ENCODE measurements at regions of chr11 and their contacts with region 1.

Region 1: GRCh38 chr11:75241036-75241905 is 697 bp downstream of the TPBGL start:
- DNase-seq: peak; percentile 86 to 87
- ATAC-seq: peak; percentile 79 to 90
- H3K4me3 ChIP-seq: peak overlapping the region; percentile 54
- H3K27ac ChIP-seq: peak overlapping the region; percentile 68 to 81; a peak in 5 of 6 replicates
- H3K4me1 ChIP-seq: peaks cover 10% of the 10 kb centered on the region; the same call in 2 of the 3 replicates
- CTCF ChIP-seq: peak; percentile 99
- EP300 ChIP-seq: no peak
- POLR2A ChIP-seq: 0 out of 2 replicates have a peak, but pooled peaks have one; percentile 36
- RAD21 ChIP-seq: peak; percentile 40 to 69; a peak in 4 of 5 replicates

Region 2: DNA sequence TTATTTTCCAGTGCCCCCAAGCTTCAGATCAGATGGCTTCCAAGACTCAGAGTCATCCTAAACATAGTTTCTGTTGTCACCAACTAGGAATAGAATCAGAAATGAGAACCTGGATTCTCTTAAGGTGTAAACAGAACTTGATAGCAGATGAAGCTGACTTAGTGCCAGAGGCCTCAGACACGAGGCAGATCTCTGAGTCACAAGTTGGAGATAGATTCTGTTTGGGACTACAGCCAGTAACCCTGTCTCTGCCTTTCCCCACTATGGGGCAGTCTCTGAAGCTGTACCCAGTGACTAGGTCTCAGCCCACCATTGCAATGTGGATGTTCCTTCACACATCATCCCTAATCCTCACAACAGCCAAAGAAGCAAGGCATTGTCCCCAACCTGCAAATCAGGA is 227.1 kb before region 1 on chr11:
- CTCF ChIA-PET with region 1: interaction called, 355 read pairs
- POLR2A ChIA-PET with region 1: no interaction called
- DNase-seq: peak in 1 of 2 experiments; percentile 18
- ATAC-seq: peak; percentile 41 to 63; a peak in 2 of 6 replicates
- H3K4me3 ChIP-seq: no peak overlapping the region
- H3K27ac ChIP-seq: no peak overlapping the region
- H3K4me1 ChIP-seq: peaks cover 3% of the 10 kb centered on the region; the same call in 1 of the 3 replicates
- CTCF ChIP-seq: no peak
- EP300 ChIP-seq: no peak
- POLR2A ChIP-seq: no peak
- RAD21 ChIP-seq: no peak

Region 3: GRCh38 chr11:75142714-75143419 is 98.4 kb before region 1 on chr11:
- CTCF ChIA-PET with region 1: interaction called, 445 read pairs
- POLR2A ChIA-PET with region 1: interaction called, 3 read pairs
- DNase-seq: peak; percentile 83 to 93
- ATAC-seq: peak; percentile 82 to 87
- H3K4me3 ChIP-seq: no peak overlapping the region
- H3K27ac ChIP-seq: peak overlapping the region; percentile 63 to 77
- H3K4me1 ChIP-seq: peaks cover 11% of the 10 kb centered on the region
- CTCF ChIP-seq: no peak
- EP300 ChIP-seq: no peak
- POLR2A ChIP-seq: 0 out of 2 replicates have a peak, but pooled peaks have one; percentile 8
- RAD21 ChIP-seq: no peak

Region 4: GRCh38 chr11:75204685-75205563 is 36.3 kb before region 1 on chr11:
- CTCF ChIA-PET with region 1: interaction called, 48 read pairs
- POLR2A ChIA-PET with region 1: no interaction called
- DNase-seq: peak; percentile 75 to 84
- ATAC-seq: peak; percentile 85 to 99
- H3K4me3 ChIP-seq: no peak overlapping the region
- H3K27ac ChIP-seq: no peak overlapping the region
- H3K4me1 ChIP-seq: no peaks in the 10 kb centered on the region
- CTCF ChIP-seq: peak; percentile 85
- EP300 ChIP-seq: no peak
- POLR2A ChIP-seq: no peak
- RAD21 ChIP-seq: peak; percentile 90 to 91

Region 5: DNA sequence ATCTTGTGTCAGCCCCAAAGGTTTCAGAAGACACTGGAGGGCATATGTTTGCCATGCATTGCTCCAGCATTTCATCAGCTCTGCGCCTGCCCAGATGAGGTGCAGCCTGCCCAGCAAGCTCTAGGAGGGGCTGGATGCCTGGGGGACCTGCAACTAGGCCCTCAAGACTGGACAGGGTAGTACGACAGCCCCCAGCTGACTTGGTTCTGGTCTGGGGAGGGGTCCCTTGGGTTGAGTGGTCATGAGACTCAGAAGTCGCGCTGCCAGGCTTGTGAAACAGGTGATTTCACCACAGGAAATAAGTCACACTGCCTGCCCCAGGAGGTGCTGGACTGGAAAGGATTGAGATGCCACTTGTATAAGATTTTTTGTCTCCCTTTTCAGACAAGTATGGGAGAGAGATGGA is 22.7 kb after region 1 on chr11:
- CTCF ChIA-PET with region 1: interaction called, 26 read pairs
- POLR2A ChIA-PET with region 1: no interaction called
- DNase-seq: no peak
- ATAC-seq: no peak; a peak in 1 of 6 replicates
- H3K4me3 ChIP-seq: no peak overlapping the region
- H3K27ac ChIP-seq: peak overlapping the region; percentile 19 to 43; a peak in 1 of 6 replicates
- H3K4me1 ChIP-seq: peaks cover 9% of the 10 kb centered on the region; the same call in 1 of the 3 replicates
- CTCF ChIP-seq: no peak
- EP300 ChIP-seq: no peak
- POLR2A ChIP-seq: no peak
- RAD21 ChIP-seq: no peak